ENCODE measurements at regions of chr1 and their contacts with region 1.

Region 1: GRCh38 chr1:198907423-198907746 is 268.5 kb downstream of the PTPRC start:
- DNase-seq: peak in 1 of 9 experiments; percentile 34
- ATAC-seq: peak; percentile 75
- H3K4me3 ChIP-seq: no peak overlapping the region
- H3K4me3 Mint-ChIP-seq: peak overlapping the region; percentile 65
- H3K27ac ChIP-seq: no peak overlapping the region
- H3K27ac Mint-ChIP-seq: peak overlapping the region; percentile 72
- H3K4me1 ChIP-seq: no peaks in the 10 kb centered on the region
- H3K4me1 Mint-ChIP-seq: peaks cover 30% of the 10 kb centered on the region
- H3K27me3 ChIP-seq: no peaks in the 10 kb centered on the region
- H3K27me3 Mint-ChIP-seq: no peaks in the 10 kb centered on the region
- CTCF ChIP-seq: peak; percentile 29

Region 2: GRCh38 chr1:198298640-198299039 is 608.7 kb before region 1 on chr1:
- CTCF ChIA-PET with region 1: no interaction called
- POLR2A ChIA-PET with region 1: no interaction called
- intact Hi-C with region 1: no loop called
- DNase-seq: no peak
- ATAC-seq: no peak
- H3K4me3 ChIP-seq: no peak overlapping the region
- H3K4me3 Mint-ChIP-seq: no peak overlapping the region
- H3K27ac ChIP-seq: no peak overlapping the region
- H3K27ac Mint-ChIP-seq: peak overlapping the region; percentile 7
- H3K4me1 ChIP-seq: no peaks in the 10 kb centered on the region
- H3K4me1 Mint-ChIP-seq: peaks cover 12% of the 10 kb centered on the region
- H3K27me3 ChIP-seq: no peaks in the 10 kb centered on the region
- H3K27me3 Mint-ChIP-seq: no peaks in the 10 kb centered on the region
- CTCF ChIP-seq: no peak

Region 3: DNA sequence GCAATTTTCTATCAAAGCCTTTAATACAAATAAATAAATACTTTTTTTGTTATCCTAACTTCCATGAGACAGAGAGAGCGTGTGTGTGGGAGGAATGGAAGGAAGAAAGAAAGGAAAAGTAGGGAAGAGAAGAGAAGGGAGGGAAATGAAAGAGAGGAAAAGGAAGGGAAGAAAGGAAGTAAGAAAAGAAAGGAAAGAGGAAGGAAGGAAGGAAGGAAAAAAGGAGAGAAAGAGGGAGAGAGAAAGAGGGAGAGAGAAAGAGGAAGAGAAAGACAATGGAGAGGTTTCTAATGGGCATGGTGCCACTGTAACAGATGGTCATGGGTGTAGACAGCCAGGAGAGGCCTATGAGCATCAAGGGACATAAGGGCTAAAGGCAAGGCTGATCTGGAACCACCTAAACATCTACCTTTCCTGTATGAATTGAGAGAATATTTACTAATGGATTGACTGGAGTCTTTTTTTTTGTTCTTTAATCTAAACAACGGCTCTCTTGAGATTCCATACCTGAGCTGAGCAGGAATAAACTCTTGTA is 33.6 kb before region 1 on chr1:
- CTCF ChIA-PET with region 1: no interaction called
- POLR2A ChIA-PET with region 1: no interaction called
- intact Hi-C with region 1: loop called in 1 of 2 experiments (anchors 5 kb)
- DNase-seq: no peak
- ATAC-seq: no peak
- H3K4me3 ChIP-seq: no peak overlapping the region
- H3K4me3 Mint-ChIP-seq: no peak overlapping the region
- H3K27ac ChIP-seq: no peak overlapping the region
- H3K27ac Mint-ChIP-seq: no peak overlapping the region
- H3K4me1 ChIP-seq: no peaks in the 10 kb centered on the region
- H3K4me1 Mint-ChIP-seq: no peaks in the 10 kb centered on the region
- H3K27me3 ChIP-seq: no peaks in the 10 kb centered on the region
- H3K27me3 Mint-ChIP-seq: no peaks in the 10 kb centered on the region
- CTCF ChIP-seq: no peak

Region 4: GRCh38 chr1:198929961-198930599 is 22.7 kb after region 1 on chr1:
- CTCF ChIA-PET with region 1: no interaction called
- POLR2A ChIA-PET with region 1: no interaction called
- intact Hi-C with region 1: loop called in 1 of 2 experiments (anchors 2 kb)
- DNase-seq: peak in 3 of 9 experiments; percentile 11 to 71 (median 39)
- ATAC-seq: peak; percentile 66
- H3K4me3 ChIP-seq: peak overlapping the region; percentile 22 to 43
- H3K4me3 Mint-ChIP-seq: peak overlapping the region; percentile 83
- H3K27ac ChIP-seq: no peak overlapping the region
- H3K27ac Mint-ChIP-seq: peak overlapping the region; percentile 87
- H3K4me1 ChIP-seq: peaks cover 44% of the 10 kb centered on the region
- H3K4me1 Mint-ChIP-seq: peaks cover 53% of the 10 kb centered on the region
- H3K27me3 ChIP-seq: no peaks in the 10 kb centered on the region
- H3K27me3 Mint-ChIP-seq: no peaks in the 10 kb centered on the region
- CTCF ChIP-seq: no peak

Region 5: DNA sequence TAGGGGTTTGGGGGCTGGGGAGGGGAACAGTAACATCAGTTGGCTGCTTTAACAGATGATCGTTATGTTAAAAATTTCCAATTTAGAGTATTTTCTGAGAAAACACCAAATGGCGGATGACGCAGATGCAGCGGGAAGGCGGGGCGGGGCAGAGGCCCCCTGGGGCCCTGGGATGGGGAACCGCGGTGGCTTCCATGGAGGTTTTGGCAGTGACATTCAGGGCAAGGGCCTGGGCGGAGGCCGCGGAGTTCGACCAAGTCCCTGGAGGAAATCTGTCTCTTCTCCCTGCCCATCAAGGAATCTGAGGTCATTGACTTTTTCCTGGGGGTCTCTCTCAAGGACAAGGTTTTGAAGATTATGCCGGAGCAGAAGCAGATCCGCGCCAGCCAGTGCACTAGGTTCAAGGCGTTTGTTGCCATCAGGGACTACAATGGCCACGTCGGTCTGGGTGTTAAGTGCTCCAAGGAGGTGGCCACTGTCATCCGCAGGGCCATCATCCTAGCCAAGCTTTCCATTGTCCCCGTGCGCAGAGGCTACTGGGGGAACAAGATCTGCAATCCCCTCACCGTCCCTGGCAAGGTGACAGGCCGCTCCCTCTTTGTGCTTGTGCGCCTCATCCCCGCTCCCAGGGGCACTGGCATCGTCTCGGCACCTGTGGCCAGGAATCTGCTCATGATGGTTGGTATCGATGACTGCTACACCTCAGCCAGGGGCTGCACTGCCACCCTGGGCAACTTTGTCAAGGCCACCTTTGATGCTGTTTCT is 41.7 kb after region 1 on chr1:
- CTCF ChIA-PET with region 1: no interaction called
- POLR2A ChIA-PET with region 1: no interaction called
- intact Hi-C with region 1: no loop called
- DNase-seq: no peak
- ATAC-seq: no peak
- H3K4me3 ChIP-seq: no peak overlapping the region
- H3K4me3 Mint-ChIP-seq: no peak overlapping the region
- H3K27ac ChIP-seq: no peak overlapping the region
- H3K27ac Mint-ChIP-seq: no peak overlapping the region
- H3K4me1 ChIP-seq: no peaks in the 10 kb centered on the region
- H3K4me1 Mint-ChIP-seq: no peaks in the 10 kb centered on the region
- H3K27me3 ChIP-seq: no peaks in the 10 kb centered on the region
- H3K27me3 Mint-ChIP-seq: no peaks in the 10 kb centered on the region
- CTCF ChIP-seq: no peak